Vagina (tissue), 2 donors: ENCODE measurements at regions of chr4 and their contacts with region 1.

Region 1: DNA sequence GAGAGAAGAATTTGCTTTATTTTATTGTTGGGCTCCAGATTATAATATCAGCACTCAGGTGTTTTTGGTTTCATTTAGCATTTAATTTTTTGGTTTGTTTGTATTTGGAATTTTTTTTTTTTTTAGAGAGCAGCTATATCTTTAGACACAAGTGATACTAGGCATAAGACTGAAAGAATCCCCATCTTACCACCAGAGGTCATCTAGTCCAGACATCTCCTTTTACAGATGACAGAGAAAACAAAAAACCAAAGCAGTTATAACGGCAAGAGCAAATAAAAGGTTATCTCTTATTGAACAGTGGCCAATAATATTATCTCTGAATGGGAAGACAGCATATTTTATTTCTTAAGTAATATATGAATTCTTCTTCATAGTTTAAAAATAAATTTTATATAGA is 22.8 kb downstream of the USP38 start:
- DNase-seq: no peak
- H3K4me3 ChIP-seq: no peak overlapping the region
- H3K27ac ChIP-seq: no peak overlapping the region
- H3K4me1 ChIP-seq: no peaks in the 10 kb centered on the region
- H3K27me3 ChIP-seq: no peaks in the 10 kb centered on the region
- CTCF ChIP-seq: no peak
- POLR2A ChIP-seq: no peak

Region 2: DNA sequence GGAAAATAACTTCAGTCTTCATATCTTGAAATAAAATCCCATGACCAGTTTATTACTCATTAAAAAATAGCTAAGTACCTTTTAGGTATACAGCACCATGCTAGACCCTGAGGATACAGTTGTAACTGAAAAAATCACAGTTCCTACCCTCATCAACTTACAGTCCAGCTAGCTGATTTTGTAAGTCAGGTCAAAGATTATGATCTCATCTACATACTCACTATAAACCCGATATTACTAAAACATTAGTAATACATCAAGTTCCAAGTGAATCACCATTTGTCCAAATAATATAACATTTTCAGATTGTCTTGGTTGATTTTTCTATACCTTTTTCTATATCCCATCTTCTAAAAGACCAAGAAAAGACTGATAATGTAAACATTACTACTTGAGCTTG is 695.4 kb before region 1 on chr4:
- intact Hi-C with region 1: no loop called
- DNase-seq: no peak
- H3K4me3 ChIP-seq: no peak overlapping the region
- H3K27ac ChIP-seq: no peak overlapping the region
- H3K4me1 ChIP-seq: no peaks in the 10 kb centered on the region
- H3K27me3 ChIP-seq: no peaks in the 10 kb centered on the region
- CTCF ChIP-seq: no peak
- POLR2A ChIP-seq: no peak

Region 3: DNA sequence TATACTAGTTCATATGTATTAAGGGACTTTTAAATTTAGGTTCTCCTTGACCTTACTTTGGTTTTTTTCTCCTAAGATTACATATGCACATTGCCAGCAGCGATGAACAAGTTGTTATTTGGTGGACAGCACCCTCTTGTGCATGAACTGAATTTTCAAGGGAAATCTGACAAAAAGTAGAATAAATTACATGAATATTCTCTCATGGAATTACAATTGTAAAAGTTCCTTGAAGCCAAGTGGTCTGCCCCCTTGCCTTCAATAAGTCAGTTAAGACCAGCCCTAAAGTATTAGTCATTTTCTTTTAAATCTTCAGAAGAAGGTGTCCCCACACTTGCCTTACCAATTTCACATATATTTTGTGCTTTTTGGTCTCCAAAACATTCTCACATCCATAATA is 275.3 kb after region 1 on chr4:
- intact Hi-C with region 1: loop called (anchors 5 kb)
- DNase-seq: no peak
- H3K4me3 ChIP-seq: no peak overlapping the region
- H3K27ac ChIP-seq: no peak overlapping the region
- H3K4me1 ChIP-seq: no peaks in the 10 kb centered on the region
- H3K27me3 ChIP-seq: no peaks in the 10 kb centered on the region
- CTCF ChIP-seq: peak; percentile 20 to 53 (median 24)
- POLR2A ChIP-seq: no peak

Region 4: DNA sequence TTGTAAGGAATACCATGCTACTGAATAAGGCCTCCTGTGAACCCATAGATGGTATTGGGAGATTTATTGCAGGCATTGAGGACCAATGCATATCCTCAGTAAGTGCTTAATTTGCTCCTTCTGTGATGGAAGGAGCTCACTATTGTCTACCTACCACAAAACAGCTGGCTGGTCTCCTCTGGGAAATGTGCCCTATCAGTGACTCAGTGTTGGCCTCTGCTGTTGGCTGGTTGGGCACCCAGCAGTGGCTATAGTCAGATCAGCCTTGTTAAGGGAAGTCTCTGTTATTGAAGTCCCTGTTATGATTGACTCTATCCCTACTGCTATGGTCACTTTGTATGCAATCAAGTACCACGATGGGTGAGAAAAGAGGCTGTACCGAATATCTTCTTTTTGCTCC is 2000.4 kb after region 1 on chr4:
- intact Hi-C with region 1: no loop called
- DNase-seq: no peak
- H3K4me3 ChIP-seq: no peak overlapping the region
- H3K27ac ChIP-seq: no peak overlapping the region
- H3K4me1 ChIP-seq: no peaks in the 10 kb centered on the region
- H3K27me3 ChIP-seq: no peaks in the 10 kb centered on the region
- CTCF ChIP-seq: no peak
- POLR2A ChIP-seq: no peak